ENCODE measurements at regions of chr9 and their contacts with region 1.

Region 1: GRCh38 chr9:15529566-15530324 is 19.0 kb upstream of the PSIP1 start:
- DNase-seq: no peak
- ATAC-seq: no peak
- H3K4me3 ChIP-seq: no peak overlapping the region
- H3K4me3 Mint-ChIP-seq: no peak overlapping the region
- H3K27ac ChIP-seq: no peak overlapping the region
- H3K27ac Mint-ChIP-seq: no peak overlapping the region
- H3K4me1 ChIP-seq: peaks cover 5% of the 10 kb centered on the region
- H3K4me1 Mint-ChIP-seq: peaks cover 9% of the 10 kb centered on the region
- H3K27me3 ChIP-seq: no peaks in the 10 kb centered on the region
- H3K27me3 Mint-ChIP-seq: peaks cover 3% of the 10 kb centered on the region
- CTCF ChIP-seq: no peak

Region 2: DNA sequence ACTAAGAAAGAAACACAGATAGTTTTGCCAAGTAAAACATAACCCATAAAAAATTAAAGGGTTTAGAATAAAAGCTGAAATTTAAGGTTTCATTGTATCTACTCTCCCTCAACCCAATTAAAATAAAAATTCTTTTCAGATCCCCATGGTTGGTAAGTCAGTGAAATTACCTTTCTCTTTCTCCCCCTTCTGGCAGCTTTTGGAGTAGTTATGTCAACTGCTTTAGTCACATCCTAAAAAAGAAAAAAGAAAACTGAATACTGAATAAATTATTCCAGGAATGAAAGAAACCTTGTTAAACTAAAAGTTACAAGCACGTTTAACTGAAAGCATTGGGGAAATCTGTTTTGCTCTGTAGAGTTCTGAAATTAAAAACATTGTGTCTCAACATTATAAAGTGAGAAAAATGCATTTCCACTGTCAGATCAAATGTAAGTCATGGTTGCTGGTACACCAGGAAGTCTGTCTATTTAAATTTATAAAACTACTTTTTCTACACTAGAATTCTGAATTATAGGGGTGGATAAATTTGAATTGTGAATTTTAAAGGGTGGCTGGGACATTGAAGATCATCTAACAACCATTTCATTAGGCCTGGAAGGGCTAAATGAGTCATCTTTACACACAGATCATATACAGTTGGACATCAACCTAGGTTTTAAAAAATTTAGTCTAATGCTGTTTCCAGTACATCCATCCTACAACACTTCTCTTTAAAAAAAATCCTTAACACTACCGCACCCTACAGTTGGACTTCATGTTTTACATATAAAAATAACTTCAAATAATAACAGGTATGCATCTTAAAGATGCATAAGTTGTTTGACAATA is 43.7 kb before region 1 on chr9:
- CTCF ChIA-PET with region 1: no interaction called
- POLR2A ChIA-PET with region 1: no interaction called
- intact Hi-C with region 1: loop called in 1 of 2 experiments (anchors 1 kb)
- DNase-seq: peak in 2 of 9 experiments; percentile 31 to 51
- ATAC-seq: no peak
- H3K4me3 ChIP-seq: no peak overlapping the region
- H3K4me3 Mint-ChIP-seq: no peak overlapping the region
- H3K27ac ChIP-seq: no peak overlapping the region
- H3K27ac Mint-ChIP-seq: no peak overlapping the region
- H3K4me1 ChIP-seq: no peaks in the 10 kb centered on the region
- H3K4me1 Mint-ChIP-seq: peaks cover 48% of the 10 kb centered on the region
- H3K27me3 ChIP-seq: no peaks in the 10 kb centered on the region
- H3K27me3 Mint-ChIP-seq: no peaks in the 10 kb centered on the region
- CTCF ChIP-seq: peak; percentile 61

Region 3: GRCh38 chr9:15501179-15501578 is 28.6 kb before region 1 on chr9:
- CTCF ChIA-PET with region 1: interaction called, 4 read pairs
- POLR2A ChIA-PET with region 1: no interaction called
- intact Hi-C with region 1: loop called in 1 of 2 experiments (anchors 5 kb)
- DNase-seq: peak in 2 of 9 experiments; percentile 17 to 36
- ATAC-seq: no peak
- H3K4me3 ChIP-seq: no peak overlapping the region
- H3K4me3 Mint-ChIP-seq: no peak overlapping the region
- H3K27ac ChIP-seq: no peak overlapping the region
- H3K27ac Mint-ChIP-seq: peak overlapping the region; percentile 24
- H3K4me1 ChIP-seq: peaks cover 42% of the 10 kb centered on the region
- H3K4me1 Mint-ChIP-seq: peaks cover 70% of the 10 kb centered on the region
- H3K27me3 ChIP-seq: no peaks in the 10 kb centered on the region
- H3K27me3 Mint-ChIP-seq: no peaks in the 10 kb centered on the region
- CTCF ChIP-seq: no peak

Region 4: GRCh38 chr9:15552636-15553527 is 23.1 kb after region 1 on chr9 and contains the start of gene CCDC171:
- CTCF ChIA-PET with region 1: interaction called, 4 read pairs
- POLR2A ChIA-PET with region 1: no interaction called
- intact Hi-C with region 1: loop called in 1 of 2 experiments (anchors 2 kb)
- DNase-seq: peak; percentile 67 to 96 (median 84)
- ATAC-seq: peak; percentile 79
- H3K4me3 ChIP-seq: peak within 1 kb of the TSS; percentile 88 to 98
- H3K4me3 Mint-ChIP-seq: peak within 1 kb of the TSS; percentile 95
- H3K27ac ChIP-seq: peak within 1 kb of the TSS; percentile 54 to 75
- H3K27ac Mint-ChIP-seq: peak within 1 kb of the TSS; percentile 82
- H3K4me1 ChIP-seq: no peaks in the 10 kb centered on the region
- H3K4me1 Mint-ChIP-seq: peaks cover 9% of the 10 kb centered on the region
- H3K27me3 ChIP-seq: no peaks in the 10 kb centered on the region
- H3K27me3 Mint-ChIP-seq: no peaks in the 10 kb centered on the region
- CTCF ChIP-seq: no peak
- total RNA-seq, gene CCDC171: 1.1 to 1.7 TPM